ENCODE measurements at regions of chr14 and their contacts with region 1.

Region 1: GRCh38 chr14:81287016-81287776 is 66.4 kb upstream of the GTF2A1 start:
- H3K4me3 Mint-ChIP-seq: no peak overlapping the region
- H3K27ac Mint-ChIP-seq: no peak overlapping the region
- H3K4me1 Mint-ChIP-seq: peaks cover 30% of the 10 kb centered on the region
- H3K27me3 Mint-ChIP-seq: peaks cover 3% of the 10 kb centered on the region

Region 2: GRCh38 chr14:81342850-81343580 is 55.8 kb after region 1 on chr14:
- intact Hi-C with region 1: loop called (anchors 10 kb)
- H3K4me3 Mint-ChIP-seq: no peak overlapping the region
- H3K27ac Mint-ChIP-seq: no peak overlapping the region
- H3K4me1 Mint-ChIP-seq: peaks cover 3% of the 10 kb centered on the region
- H3K27me3 Mint-ChIP-seq: peaks cover 9% of the 10 kb centered on the region

Measured in dendritic cell treated with granulocyte-macrophage colony-stimulating factor and Interleukin-4, amounts not matched to agents 40 ng/mL and 50 ng/mL, for 4 days (primary cell).